ENCODE measurements at regions of chr10 and their contacts with region 1.

Region 1: GRCh38 chr10:125719146-125720001 is at the start of gene EDRF1:
- DNase-seq: peak; percentile 98 to 100
- H3K4me3 ChIP-seq: peak within 1 kb of the TSS; percentile 89 to 100
- H3K27ac ChIP-seq: peak within 1 kb of the TSS; percentile 90 to 91
- H3K4me1 ChIP-seq: peaks cover 0 to 18% (median 14%) of the 10 kb centered on the region in 4 donors
- H3K27me3 ChIP-seq: no peaks in the 10 kb centered on the region
- CTCF ChIP-seq: no peak

Region 2: DNA sequence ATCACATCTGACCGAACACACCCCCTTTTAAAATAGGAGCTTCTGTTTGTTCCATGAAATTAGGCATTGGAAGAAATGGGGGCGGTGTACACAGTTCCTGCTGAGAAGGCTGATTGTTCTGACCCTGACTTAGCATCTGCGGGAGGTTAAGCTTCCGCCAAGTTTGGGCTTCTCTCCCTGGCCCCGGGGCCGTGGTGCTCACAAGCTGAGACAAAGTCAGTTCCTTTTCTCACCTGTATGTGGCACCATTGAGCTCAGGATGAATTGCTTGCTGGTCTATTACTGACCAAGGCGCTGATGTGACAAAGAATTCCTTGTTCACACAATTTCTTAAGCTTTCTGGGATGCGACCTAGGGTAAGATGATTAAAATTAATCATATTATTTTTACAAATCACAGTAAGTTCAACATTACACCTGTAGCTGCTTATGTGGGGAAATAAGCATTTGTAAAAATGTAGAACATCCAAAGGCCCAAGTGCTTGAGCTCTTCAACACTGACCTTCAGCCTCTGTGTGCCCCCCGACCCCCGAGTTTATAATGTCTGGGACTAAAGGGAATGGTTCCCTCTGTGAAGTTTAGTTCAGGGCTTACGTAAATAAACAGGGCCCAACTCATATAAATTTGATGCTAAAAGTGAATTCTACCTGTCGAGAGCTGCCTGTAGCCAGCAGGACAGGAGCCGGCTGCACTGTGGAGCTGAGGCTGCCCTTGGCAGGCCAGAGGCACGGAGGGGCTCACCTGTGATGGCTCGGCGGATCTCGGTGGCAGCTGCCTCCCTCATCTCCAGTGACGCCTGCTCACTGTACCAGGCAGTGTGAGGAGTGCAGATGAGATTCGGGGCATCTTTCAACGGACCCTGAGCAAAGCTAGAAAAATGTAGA is 726.7 kb before region 1 on chr10:
- intact Hi-C with region 1: loop called (anchors 10 kb)
- DNase-seq: peak; percentile 81 to 89
- H3K4me3 ChIP-seq: no peak overlapping the region
- H3K27ac ChIP-seq: peak overlapping the region; percentile 34 to 45
- H3K4me1 ChIP-seq: peaks cover 0 to 35% (median 12%) of the 10 kb centered on the region in 4 donors
- H3K27me3 ChIP-seq: no peaks in the 10 kb centered on the region
- CTCF ChIP-seq: peak; percentile 78 to 85

Region 3: GRCh38 chr10:125048101-125048864 is 671.1 kb before region 1 on chr10:
- intact Hi-C with region 1: loop called (anchors 5 kb)
- DNase-seq: peak; percentile 82 to 91
- H3K4me3 ChIP-seq: no peak overlapping the region
- H3K27ac ChIP-seq: peak overlapping the region; percentile 48 to 61
- H3K4me1 ChIP-seq: peaks cover 4 to 97% (median 66%) of the 10 kb centered on the region in 4 donors
- H3K27me3 ChIP-seq: no peaks in the 10 kb centered on the region
- CTCF ChIP-seq: peak; percentile 97 to 98

Region 4: DNA sequence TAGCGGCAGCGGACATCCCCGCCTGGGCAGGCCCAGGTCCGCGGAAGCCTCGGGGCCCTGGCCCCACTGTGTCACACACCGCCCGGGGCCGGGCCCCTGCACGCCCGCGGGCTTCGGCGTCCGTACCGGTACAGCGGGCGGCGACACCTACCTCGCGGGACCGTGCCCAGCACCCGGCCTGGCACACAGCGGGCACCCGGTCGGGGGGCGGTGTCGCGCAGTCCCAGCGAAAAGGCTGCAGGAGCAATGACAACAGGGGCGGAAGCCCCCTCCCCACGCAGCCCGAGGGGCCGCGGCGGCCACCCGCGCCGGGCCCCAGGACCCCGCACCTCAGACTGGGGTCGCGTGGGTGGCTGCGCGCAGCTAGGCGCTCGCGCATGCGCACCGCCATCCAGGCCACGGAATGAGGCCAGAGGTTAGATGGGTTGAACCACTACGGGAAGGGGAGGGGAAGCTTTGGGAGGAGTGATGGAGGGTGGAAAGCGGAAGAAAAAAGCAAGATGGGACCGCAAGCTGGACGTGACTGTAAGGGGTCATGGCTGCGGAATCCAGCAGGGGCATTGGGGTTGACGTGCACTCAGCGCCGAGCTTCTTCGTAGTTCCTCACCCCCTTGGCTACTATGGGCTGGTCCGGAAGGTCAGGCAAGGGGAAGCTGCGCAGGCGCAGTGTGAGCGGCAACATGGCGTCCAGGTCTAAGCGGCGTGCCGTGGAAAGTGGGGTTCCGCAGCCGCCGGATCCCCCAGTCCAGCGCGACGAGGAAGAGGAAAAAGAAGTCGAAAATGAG is 103.7 kb after region 1 on chr10 and contains the starts of genes BCCIP and UROS:
- intact Hi-C with region 1: loop called (anchors 10 kb)
- DNase-seq: peak; percentile 89 to 93
- H3K4me3 ChIP-seq: peak within 1 kb of the TSS; percentile 77 to 90
- H3K27ac ChIP-seq: peak within 1 kb of the TSS; percentile 76 to 85
- H3K4me1 ChIP-seq: peaks cover 0 to 36% (median 24%) of the 10 kb centered on the region in 4 donors
- H3K27me3 ChIP-seq: no peaks in the 10 kb centered on the region
- CTCF ChIP-seq: no peak